IMR-90 (cell line): ENCODE measurements at regions of chr2 and their contacts with region 1.

Region 1: GRCh38 chr2:147910990-147911473 is 66.2 kb downstream of the ACVR2A start:
- DNase-seq: peak; percentile 77
- ATAC-seq: peak; percentile 53
- H3K4me3 ChIP-seq: no peak overlapping the region
- H3K27ac ChIP-seq: no peak overlapping the region
- H3K4me1 ChIP-seq: no peaks in the 10 kb centered on the region
- H3K27me3 ChIP-seq: no peaks in the 10 kb centered on the region
- CTCF ChIP-seq: peak; percentile 84
- POLR2A ChIP-seq: peak; percentile 43; the same call in 1 of the 2 replicates
- RAD21 ChIP-seq: peak; percentile 88

Region 2: DNA sequence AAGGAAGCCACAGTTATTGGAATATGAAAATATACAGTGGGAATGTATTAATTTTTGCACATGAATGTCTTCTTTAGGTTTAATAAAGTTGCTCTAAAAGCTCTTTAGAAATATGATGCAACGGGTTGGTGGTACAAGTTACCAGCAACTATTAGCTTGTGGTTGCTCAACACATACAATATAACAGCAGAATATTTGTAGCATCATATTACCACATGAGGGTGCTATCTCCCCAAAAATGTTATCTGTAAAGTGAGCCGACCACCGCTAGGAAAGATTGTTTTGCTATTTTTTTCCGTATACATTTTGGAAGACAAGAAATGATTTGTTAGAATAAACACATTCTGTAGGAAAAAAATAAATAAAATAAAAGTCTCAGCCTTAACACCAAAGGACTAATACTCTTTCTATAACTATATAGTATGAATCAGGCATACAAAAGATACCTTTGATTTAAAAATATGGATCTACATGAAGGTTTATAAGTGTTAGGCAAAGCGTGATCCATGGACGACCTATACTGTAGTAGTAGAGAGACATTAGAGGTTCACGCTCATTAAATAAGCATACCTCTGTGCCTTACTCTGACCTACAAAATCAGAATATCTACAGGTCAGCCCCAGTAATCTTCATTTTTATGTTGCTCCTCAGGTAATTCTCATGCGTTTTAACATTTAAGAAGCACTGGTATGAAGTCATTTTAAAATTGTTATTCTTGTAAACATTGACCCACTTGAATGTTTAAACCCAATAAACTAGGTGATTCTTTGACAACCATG is 1176.8 kb before region 1 on chr2:
- CTCF ChIA-PET with region 1: no interaction called
- POLR2A ChIA-PET with region 1: no interaction called
- dilution Hi-C with region 1: no loop called
- in situ Hi-C with region 1: no loop called
- intact Hi-C with region 1: loop called (anchors 1 kb)
- DNase-seq: peak; percentile 41
- ATAC-seq: peak; percentile 83
- H3K4me3 ChIP-seq: no peak overlapping the region
- H3K27ac ChIP-seq: no peak overlapping the region
- H3K4me1 ChIP-seq: no peaks in the 10 kb centered on the region
- H3K27me3 ChIP-seq: no peaks in the 10 kb centered on the region
- CTCF ChIP-seq: peak; percentile 46
- POLR2A ChIP-seq: no peak
- RAD21 ChIP-seq: peak; percentile 51

Region 3: DNA sequence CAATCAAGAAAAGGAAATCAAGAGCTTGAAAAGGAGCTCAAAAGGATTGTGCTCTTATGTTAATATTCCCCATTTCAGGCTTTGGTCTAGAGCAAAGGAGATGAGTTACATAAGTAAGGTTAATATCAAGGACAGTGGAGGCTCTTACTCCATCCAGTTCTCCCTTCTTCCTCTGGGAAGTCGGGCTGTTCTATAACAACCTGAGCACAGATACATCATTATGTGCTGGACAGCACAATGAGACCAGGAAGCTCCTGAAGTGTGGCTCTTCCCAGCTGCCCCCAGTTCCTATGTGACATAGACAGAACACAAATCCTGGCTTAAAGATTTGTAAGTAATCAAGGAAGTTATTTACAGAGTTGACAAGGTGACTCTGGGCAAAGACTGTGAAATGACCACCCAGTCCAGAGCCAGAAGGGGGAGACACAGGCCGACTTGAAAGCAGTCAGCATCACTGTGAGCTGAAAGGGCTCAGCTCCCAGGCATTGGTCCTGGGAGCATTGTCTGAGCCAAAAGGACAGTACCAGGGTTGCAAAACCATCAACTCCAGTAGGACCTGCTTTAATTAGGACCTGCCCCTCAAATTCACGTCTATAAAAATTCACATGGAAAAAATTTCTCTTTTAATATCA is 983.8 kb before region 1 on chr2:
- CTCF ChIA-PET with region 1: interaction called, 3 read pairs
- POLR2A ChIA-PET with region 1: no interaction called
- dilution Hi-C with region 1: no loop called
- in situ Hi-C with region 1: loop called (anchors 10 kb)
- intact Hi-C with region 1: loop called (anchors 1 kb)
- DNase-seq: peak; percentile 31
- ATAC-seq: peak; percentile 99
- H3K4me3 ChIP-seq: no peak overlapping the region
- H3K27ac ChIP-seq: no peak overlapping the region
- H3K4me1 ChIP-seq: no peaks in the 10 kb centered on the region
- H3K27me3 ChIP-seq: no peaks in the 10 kb centered on the region
- CTCF ChIP-seq: peak; percentile 34
- POLR2A ChIP-seq: no peak
- RAD21 ChIP-seq: peak; percentile 43; the same call in 1 of the 2 replicates

Region 4: GRCh38 chr2:147082850-147083522 is 828.0 kb before region 1 on chr2:
- CTCF ChIA-PET with region 1: interaction called, 4 read pairs
- POLR2A ChIA-PET with region 1: no interaction called
- dilution Hi-C with region 1: no loop called
- in situ Hi-C with region 1: loop called (anchors 25 kb)
- intact Hi-C with region 1: loop called (anchors 1 kb)
- DNase-seq: peak; percentile 62
- ATAC-seq: peak; percentile 82
- H3K4me3 ChIP-seq: no peak overlapping the region
- H3K27ac ChIP-seq: no peak overlapping the region
- H3K4me1 ChIP-seq: no peaks in the 10 kb centered on the region; the same call in 1 of the 2 replicates
- H3K27me3 ChIP-seq: no peaks in the 10 kb centered on the region
- CTCF ChIP-seq: peak; percentile 55
- POLR2A ChIP-seq: no peak
- RAD21 ChIP-seq: peak; percentile 21; the same call in 1 of the 2 replicates

Region 5: GRCh38 chr2:147639891-147640290 is 271.1 kb before region 1 on chr2:
- CTCF ChIA-PET with region 1: no interaction called
- POLR2A ChIA-PET with region 1: no interaction called
- dilution Hi-C with region 1: no loop called
- in situ Hi-C with region 1: no loop called
- intact Hi-C with region 1: loop called (anchors 10 kb)
- DNase-seq: no peak
- ATAC-seq: no peak
- H3K4me3 ChIP-seq: no peak overlapping the region
- H3K27ac ChIP-seq: no peak overlapping the region
- H3K4me1 ChIP-seq: peaks cover 3% of the 10 kb centered on the region; the same call in 1 of the 2 replicates
- H3K27me3 ChIP-seq: no peaks in the 10 kb centered on the region; the same call in 1 of the 2 replicates
- CTCF ChIP-seq: no peak
- POLR2A ChIP-seq: no peak
- RAD21 ChIP-seq: no peak